Activated CD8-positive, alpha-beta T cell treated with anti-CD3 and anti-CD28 coated beads for 36 hours (primary cell): ENCODE measurements at regions of chr11 and their contacts with region 1.

Region 1: GRCh38 chr11:67317205-67317887 is 14.0 kb downstream of the SSH3 start:
- DNase-seq: peak; percentile 98
- ATAC-seq: peak; percentile 91
- H3K4me3 Mint-ChIP-seq: peak overlapping the region; percentile 94
- H3K27ac Mint-ChIP-seq: peak overlapping the region; percentile 97
- H3K4me1 Mint-ChIP-seq: peaks cover 16% of the 10 kb centered on the region
- H3K27me3 Mint-ChIP-seq: no peaks in the 10 kb centered on the region
- CTCF ChIP-seq: peak; percentile 82

Region 2: DNA sequence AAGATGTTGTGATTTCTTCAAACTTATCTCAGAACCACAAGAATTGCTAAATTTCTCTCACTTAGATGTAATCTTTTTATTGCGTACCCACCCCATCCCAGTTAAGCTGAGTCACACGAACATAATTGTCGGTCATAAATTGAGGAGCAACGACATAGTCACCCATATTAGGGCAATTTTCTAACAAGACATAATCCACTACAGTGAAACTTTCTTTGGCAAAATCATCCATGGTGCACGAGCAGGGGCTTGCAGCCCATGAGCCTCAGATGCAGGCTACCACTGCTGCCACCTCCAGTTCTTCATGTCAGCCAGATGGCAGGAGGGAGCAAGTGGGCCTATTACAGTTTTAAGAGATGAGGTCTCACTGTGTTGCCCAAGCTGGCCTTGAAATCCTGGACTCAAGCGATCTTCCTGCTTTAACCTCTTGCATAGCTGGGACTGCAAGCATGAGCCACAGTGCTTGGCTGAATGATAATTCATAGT is 121.3 kb before region 1 on chr11:
- CTCF ChIA-PET with region 1: no interaction called
- POLR2A ChIA-PET with region 1: no interaction called
- intact Hi-C with region 1: no loop called
- DNase-seq: no peak
- ATAC-seq: no peak
- H3K4me3 Mint-ChIP-seq: no peak overlapping the region
- H3K27ac Mint-ChIP-seq: no peak overlapping the region
- H3K4me1 Mint-ChIP-seq: peaks cover 3% of the 10 kb centered on the region
- H3K27me3 Mint-ChIP-seq: no peaks in the 10 kb centered on the region
- CTCF ChIP-seq: no peak

Region 3: DNA sequence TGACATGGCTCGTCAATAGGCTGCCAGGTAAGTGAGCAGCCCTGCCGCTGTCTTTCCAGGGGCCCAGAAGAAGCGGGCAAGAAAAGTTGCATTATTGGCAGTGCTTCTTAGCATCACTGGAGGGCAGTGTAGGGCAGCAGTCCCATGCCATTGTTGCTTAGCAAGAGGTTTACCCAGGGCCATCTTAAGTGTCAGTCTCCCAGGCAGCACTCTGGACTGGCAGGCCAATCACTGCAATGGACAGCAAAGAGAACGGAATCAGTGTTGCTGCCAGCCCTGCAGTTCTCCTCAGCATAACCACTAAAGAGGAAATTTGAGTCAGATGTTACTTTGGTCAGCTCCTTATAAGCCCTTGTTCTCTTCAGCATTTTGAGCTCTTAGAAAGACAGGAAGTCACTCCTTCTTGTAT is 64.5 kb before region 1 on chr11:
- CTCF ChIA-PET with region 1: interaction called, 12 read pairs
- POLR2A ChIA-PET with region 1: interaction called, 3 read pairs
- intact Hi-C with region 1: no loop called
- DNase-seq: peak; percentile 56
- ATAC-seq: peak; percentile 86
- H3K4me3 Mint-ChIP-seq: no peak overlapping the region
- H3K27ac Mint-ChIP-seq: peak overlapping the region; percentile 58
- H3K4me1 Mint-ChIP-seq: peaks cover 39% of the 10 kb centered on the region
- H3K27me3 Mint-ChIP-seq: no peaks in the 10 kb centered on the region
- CTCF ChIP-seq: peak; percentile 35

Region 4: GRCh38 chr11:67303132-67303834 is 14.1 kb before region 1 on chr11 and contains the start of gene SSH3:
- CTCF ChIA-PET with region 1: interaction called, 23 read pairs
- POLR2A ChIA-PET with region 1: interaction called, 9 read pairs
- intact Hi-C with region 1: no loop called
- DNase-seq: peak; percentile 57
- ATAC-seq: peak; percentile 84
- H3K4me3 Mint-ChIP-seq: peak within 1 kb of the TSS; percentile 59
- H3K27ac Mint-ChIP-seq: no peak within 1 kb of the TSS
- H3K4me1 Mint-ChIP-seq: peaks cover 12% of the 10 kb centered on the region
- H3K27me3 Mint-ChIP-seq: no peaks in the 10 kb centered on the region
- CTCF ChIP-seq: no peak
- total RNA-seq, gene SSH3: 7.4 to 9.1 TPM

Region 5: GRCh38 chr11:67382276-67383136 is 65.2 kb after region 1 on chr11:
- CTCF ChIA-PET with region 1: interaction called, 21 read pairs
- POLR2A ChIA-PET with region 1: no interaction called
- intact Hi-C with region 1: no loop called
- DNase-seq: peak; percentile 90
- ATAC-seq: peak; percentile 95
- H3K4me3 Mint-ChIP-seq: no peak overlapping the region
- H3K27ac Mint-ChIP-seq: no peak overlapping the region
- H3K4me1 Mint-ChIP-seq: peaks cover 2% of the 10 kb centered on the region
- H3K27me3 Mint-ChIP-seq: no peaks in the 10 kb centered on the region
- CTCF ChIP-seq: peak; percentile 94